PC-9 (cell line): ENCODE measurements at regions of chr19 and their contacts with region 1.

Region 1: DNA sequence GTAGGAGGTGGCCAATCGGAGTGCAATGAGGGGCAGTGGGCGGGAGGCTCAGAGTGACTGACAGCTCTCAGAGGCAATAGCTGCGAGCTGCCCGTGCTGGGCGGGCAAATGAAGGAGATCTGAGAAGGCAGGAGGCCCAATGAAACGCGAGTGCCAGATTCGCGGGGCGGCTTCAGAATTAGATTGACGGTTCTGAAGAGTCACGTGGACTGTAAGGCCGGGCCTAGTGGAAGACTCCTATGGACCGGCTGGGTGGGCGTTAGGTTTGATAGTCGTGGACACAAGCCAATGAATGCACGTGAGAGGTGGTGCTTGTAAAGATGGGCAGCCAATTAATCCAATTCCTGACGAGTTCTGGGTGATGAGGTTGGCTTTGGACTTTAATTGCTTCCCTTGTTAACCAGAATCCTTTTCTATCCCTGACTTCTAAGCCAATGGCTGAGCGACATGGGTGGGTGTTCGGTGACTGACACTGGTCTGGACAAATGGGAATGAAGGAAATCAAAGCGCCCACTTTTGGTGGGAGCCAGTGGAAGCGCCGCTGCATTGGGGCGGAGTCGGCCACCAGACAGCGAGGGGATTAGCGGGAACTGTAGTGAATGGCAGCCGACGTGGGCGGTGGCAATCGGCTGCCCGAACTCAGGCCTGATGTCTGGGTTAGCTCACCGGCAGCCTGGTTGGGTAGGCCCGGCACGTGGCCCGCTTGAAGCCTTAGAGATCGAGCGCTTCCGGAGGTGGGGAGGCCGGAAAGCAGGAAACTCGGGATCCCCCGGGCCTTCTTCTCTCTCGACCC is 524 bp upstream of the KHSRP start:
- DNase-seq: peak; percentile 97 to 98
- H3K4me3 ChIP-seq: no peak overlapping the region
- H3K27ac ChIP-seq: peak overlapping the region; percentile 18; the same call in 1 of the 2 replicates
- H3K4me1 ChIP-seq: peaks cover 10% of the 10 kb centered on the region
- H3K27me3 ChIP-seq: no peaks in the 10 kb centered on the region
- CTCF ChIP-seq: no peak

Region 2: GRCh38 chr19:6393074-6393983 is 31.8 kb before region 1 on chr19 and contains the start of gene GTF2F1:
- CTCF ChIA-PET with region 1: no interaction called
- POLR2A ChIA-PET with region 1: interaction called, 4 read pairs
- intact Hi-C with region 1: loop called (anchors 1 kb)
- DNase-seq: peak; percentile 72 to 82
- H3K4me3 ChIP-seq: peak within 1 kb of the TSS; percentile 94
- H3K27ac ChIP-seq: peak within 1 kb of the TSS; percentile 65
- H3K4me1 ChIP-seq: peaks cover 5% of the 10 kb centered on the region
- H3K27me3 ChIP-seq: no peaks in the 10 kb centered on the region
- CTCF ChIP-seq: no peak
- total RNA-seq, gene GTF2F1: 40.9 and 43.8 TPM in 2 replicates

Region 3: DNA sequence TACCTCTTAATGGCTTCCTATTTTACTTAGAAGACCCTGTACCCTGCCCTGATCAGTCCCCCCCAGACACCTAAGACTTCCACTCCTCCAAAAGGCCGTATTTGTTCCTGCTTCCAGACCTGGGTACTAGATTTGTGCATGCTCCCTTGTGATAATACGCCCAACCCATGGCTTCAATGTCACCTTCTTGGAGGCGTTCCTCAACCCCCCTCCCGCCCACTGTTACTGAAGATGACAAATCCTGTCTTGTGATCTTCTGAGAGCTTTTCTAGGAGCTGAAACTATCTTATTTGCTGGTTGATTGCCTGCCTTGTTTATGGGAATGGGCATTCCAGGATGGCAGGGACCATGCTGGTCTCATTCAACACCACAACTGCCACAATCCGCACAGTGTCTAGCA is 25.0 kb after region 1 on chr19:
- CTCF ChIA-PET with region 1: no interaction called
- POLR2A ChIA-PET with region 1: no interaction called
- intact Hi-C with region 1: no loop called
- DNase-seq: no peak
- H3K4me3 ChIP-seq: no peak overlapping the region
- H3K27ac ChIP-seq: no peak overlapping the region
- H3K4me1 ChIP-seq: no peaks in the 10 kb centered on the region
- H3K27me3 ChIP-seq: no peaks in the 10 kb centered on the region
- CTCF ChIP-seq: no peak

Region 4: GRCh38 chr19:6460101-6460853 is 35.1 kb after region 1 on chr19:
- CTCF ChIA-PET with region 1: no interaction called
- POLR2A ChIA-PET with region 1: no interaction called
- intact Hi-C with region 1: loop called (anchors 5 kb)
- DNase-seq: peak; percentile 93 to 94
- H3K4me3 ChIP-seq: peak overlapping the region; percentile 68
- H3K27ac ChIP-seq: peak overlapping the region; percentile 88
- H3K4me1 ChIP-seq: peaks cover 2% of the 10 kb centered on the region
- H3K27me3 ChIP-seq: no peaks in the 10 kb centered on the region
- CTCF ChIP-seq: peak; percentile 63

Region 5: GRCh38 chr19:6501740-6502648 is 76.9 kb after region 1 on chr19 and contains the start of gene TUBB4A:
- CTCF ChIA-PET with region 1: no interaction called
- POLR2A ChIA-PET with region 1: no interaction called
- intact Hi-C with region 1: no loop called
- DNase-seq: no peak
- H3K4me3 ChIP-seq: no peak within 1 kb of the TSS
- H3K27ac ChIP-seq: no peak within 1 kb of the TSS
- H3K4me1 ChIP-seq: no peaks in the 10 kb centered on the region
- H3K27me3 ChIP-seq: no peaks in the 10 kb centered on the region
- CTCF ChIP-seq: no peak
- total RNA-seq, gene TUBB4A: not detected in 2 replicates